ENCODE measurements at regions of chr2 and their contacts with region 1.

Region 1: DNA sequence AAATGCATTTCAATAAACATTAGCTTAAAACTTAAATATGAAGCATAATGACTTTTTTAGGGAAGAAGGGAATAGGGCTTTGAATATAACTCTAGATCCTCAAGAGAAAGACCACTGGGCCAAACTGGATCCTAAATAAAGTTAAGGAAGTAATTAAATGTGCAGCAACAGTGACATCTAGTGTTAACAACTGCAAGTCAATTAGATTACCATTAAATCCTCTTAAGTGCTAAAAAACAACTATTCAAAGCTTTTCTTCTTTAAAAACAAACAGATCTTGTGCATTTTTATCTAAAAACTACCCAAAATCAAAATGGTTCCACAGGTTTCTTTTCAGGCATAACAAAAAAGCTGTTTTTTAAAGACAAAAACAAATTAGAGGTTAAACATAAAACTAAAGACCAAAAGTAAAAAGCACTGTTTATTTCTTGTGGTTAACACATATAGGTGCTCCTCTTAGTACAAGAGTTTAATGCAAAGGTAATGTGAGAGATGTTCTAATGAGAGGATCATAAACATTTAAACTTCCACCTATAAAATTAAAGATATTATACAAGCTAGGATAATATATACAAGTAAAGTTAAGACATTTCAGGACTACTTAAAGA is 111.4 kb downstream of the THADA start:
- H3K4me3 ChIP-seq: no peak overlapping the region
- H3K27ac ChIP-seq: no peak overlapping the region
- H3K4me1 ChIP-seq: no peaks in the 10 kb centered on the region
- CTCF ChIP-seq: no peak; the same call in 1 of the 2 replicates

Region 2: GRCh38 chr2:42859006-42859552 is 625.3 kb before region 1 on chr2:
- CTCF ChIA-PET with region 1: interaction called, 23 read pairs
- POLR2A ChIA-PET with region 1: no interaction called
- H3K4me3 ChIP-seq: no peak overlapping the region
- H3K27ac ChIP-seq: no peak overlapping the region
- H3K4me1 ChIP-seq: no peaks in the 10 kb centered on the region
- CTCF ChIP-seq: peak; percentile 61

Region 3: GRCh38 chr2:42944779-42945415 is 539.5 kb before region 1 on chr2:
- CTCF ChIA-PET with region 1: interaction called, 38 read pairs
- POLR2A ChIA-PET with region 1: no interaction called
- H3K4me3 ChIP-seq: no peak overlapping the region
- H3K27ac ChIP-seq: no peak overlapping the region
- H3K4me1 ChIP-seq: no peaks in the 10 kb centered on the region
- CTCF ChIP-seq: no peak

Region 4: GRCh38 chr2:42974721-42975717 is 509.4 kb before region 1 on chr2:
- CTCF ChIA-PET with region 1: interaction called, 31 read pairs
- POLR2A ChIA-PET with region 1: no interaction called
- H3K4me3 ChIP-seq: peak overlapping the region; percentile 20; the same call in 1 of the 2 replicates
- H3K27ac ChIP-seq: no peak overlapping the region; the same call in 1 of the 2 replicates
- H3K4me1 ChIP-seq: no peaks in the 10 kb centered on the region
- CTCF ChIP-seq: peak; percentile 93

Region 5: GRCh38 chr2:43219383-43220228 is 264.8 kb before region 1 on chr2:
- CTCF ChIA-PET with region 1: interaction called, 21 read pairs
- POLR2A ChIA-PET with region 1: no interaction called
- H3K4me3 ChIP-seq: peak overlapping the region; percentile 54
- H3K27ac ChIP-seq: peak overlapping the region; percentile 92
- H3K4me1 ChIP-seq: peaks cover 27% of the 10 kb centered on the region
- CTCF ChIP-seq: peak; percentile 75

Region 6: DNA sequence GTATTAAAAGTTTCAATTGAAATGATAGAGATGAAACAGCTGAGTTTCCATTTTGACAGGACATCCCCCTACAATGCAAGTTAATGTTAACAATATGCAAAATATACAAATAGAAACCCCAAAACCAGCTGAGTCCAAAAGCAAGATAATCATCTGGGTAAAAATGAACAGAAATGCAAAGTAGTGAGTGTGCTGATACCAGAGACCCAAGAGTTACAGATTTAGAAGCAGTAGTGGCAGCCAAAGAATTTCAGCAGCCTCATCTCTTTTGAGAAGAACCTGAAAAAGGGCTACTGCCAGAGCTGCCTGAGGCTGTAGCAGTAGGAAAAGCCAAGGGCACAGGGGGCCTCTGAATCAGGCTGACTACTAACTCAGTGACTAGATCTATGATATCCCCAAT is 28.8 kb after region 1 on chr2:
- CTCF ChIA-PET with region 1: no interaction called
- POLR2A ChIA-PET with region 1: no interaction called
- H3K4me3 ChIP-seq: no peak overlapping the region
- H3K27ac ChIP-seq: no peak overlapping the region
- H3K4me1 ChIP-seq: no peaks in the 10 kb centered on the region
- CTCF ChIP-seq: no peak

Measured in HEK293 (cell line).